ENCODE measurements at regions of chr20 and their contacts with region 1.

Region 1: DNA sequence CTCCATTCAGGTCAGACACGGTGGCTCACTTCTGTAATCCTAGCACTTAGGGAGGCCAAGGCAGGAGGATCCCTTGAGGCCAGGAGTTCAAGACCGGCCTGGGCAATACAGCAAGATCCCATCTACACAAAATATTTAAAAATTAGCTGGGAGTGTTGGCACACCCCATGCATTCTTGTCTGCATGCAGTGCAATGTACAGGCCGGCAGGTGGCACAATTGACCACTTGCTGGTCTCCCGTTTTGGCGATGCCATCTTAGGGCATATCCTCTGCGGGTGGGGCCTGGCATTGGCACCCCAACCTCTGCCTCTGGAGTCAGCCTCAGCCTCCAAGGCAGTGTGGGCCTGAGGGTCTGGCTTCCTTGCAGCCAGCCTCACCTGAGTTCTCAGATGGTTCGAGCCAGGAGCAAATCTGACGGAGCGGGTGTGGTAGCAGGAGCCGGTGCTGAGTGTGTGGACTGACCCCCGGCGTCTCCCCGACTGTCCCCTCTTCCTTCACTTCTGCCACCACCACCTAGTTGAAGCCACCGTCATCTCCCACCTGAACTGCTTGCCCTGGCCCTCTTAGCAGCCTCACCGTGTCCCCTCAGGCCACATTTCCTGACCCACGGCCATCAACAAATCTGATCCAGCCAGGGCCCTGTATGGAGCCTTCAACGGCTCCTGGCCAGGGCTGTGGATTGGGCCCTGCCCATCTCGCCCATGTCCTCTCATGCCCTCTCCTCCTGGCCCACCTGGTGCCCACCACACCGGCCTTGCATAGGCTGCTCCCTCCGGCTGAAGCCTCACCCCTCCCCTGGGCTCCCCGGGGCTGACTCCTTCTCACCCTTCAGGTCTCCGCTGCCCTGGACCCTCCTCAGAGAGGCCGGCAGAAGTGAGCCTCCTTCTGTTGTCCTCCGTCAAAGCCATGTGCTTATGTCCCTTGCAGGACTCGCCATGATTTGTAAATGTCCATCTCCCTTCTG is 44.0 kb downstream of the EFCAB8 start:
- DNase-seq: peak; percentile 46
- ATAC-seq: peak; percentile 80 to 84

Region 2: GRCh38 chr20:33005132-33005566 is 102.4 kb after region 1 on chr20:
- intact Hi-C with region 1: no loop called
- DNase-seq: no peak
- ATAC-seq: no peak

Region 3: GRCh38 chr20:33076662-33077372 is 174.1 kb after region 1 on chr20:
- intact Hi-C with region 1: no loop called
- DNase-seq: no peak
- ATAC-seq: no peak

Region 4: GRCh38 chr20:33097001-33097400 is 194.3 kb after region 1 on chr20:
- intact Hi-C with region 1: loop called (anchors 2 to 10 kb)
- DNase-seq: no peak
- ATAC-seq: peak in 1 of 2 donors; percentile 73

Region 5: DNA sequence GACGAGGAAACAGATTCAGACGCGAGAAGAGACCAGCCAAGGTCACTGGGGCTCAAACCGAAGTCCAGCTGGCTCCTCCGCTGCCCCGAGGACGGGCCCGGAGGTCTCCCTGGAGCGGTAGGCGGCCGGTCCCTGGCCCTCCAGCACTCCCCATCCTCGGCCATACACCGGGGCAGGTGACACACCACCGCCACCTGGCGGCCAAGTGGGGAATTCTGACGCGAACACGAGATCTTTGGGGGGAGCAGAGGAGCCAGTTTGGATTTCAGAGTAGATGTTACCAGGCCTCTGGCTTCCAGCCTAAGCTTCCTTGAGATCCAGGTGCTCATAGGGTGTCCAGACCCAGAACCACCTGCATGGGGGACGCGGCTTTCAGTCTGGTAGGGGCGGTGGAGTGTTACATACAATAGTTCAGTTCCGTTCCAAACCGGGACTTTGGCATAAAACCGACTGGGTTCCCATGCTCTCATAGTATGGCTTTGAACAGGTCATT is 396.4 kb after region 1 on chr20:
- intact Hi-C with region 1: loop called (anchors 1 to 10 kb)
- DNase-seq: peak; percentile 62
- ATAC-seq: peak; percentile 74 to 84

Measured in left cardiac atrium (tissue), 4 donors.